ENCODE measurements at regions of chr11 and their contacts with region 1.

Region 1: GRCh38 chr11:18321980-18322711 is at the starts of genes GTF2H1 and HPS5:
- DNase-seq: peak; percentile 91 to 100 (median 96)
- ATAC-seq: peak; percentile 87
- H3K4me3 ChIP-seq: peak within 1 kb of the TSS; percentile 89 to 94
- H3K4me3 Mint-ChIP-seq: peak within 1 kb of the TSS; percentile 100
- H3K27ac ChIP-seq: peak within 1 kb of the TSS; percentile 92 to 99
- H3K27ac Mint-ChIP-seq: peak within 1 kb of the TSS; percentile 100
- H3K4me1 ChIP-seq: peaks cover 51% of the 10 kb centered on the region
- H3K4me1 Mint-ChIP-seq: peaks cover 81% of the 10 kb centered on the region
- H3K27me3 ChIP-seq: no peaks in the 10 kb centered on the region
- H3K27me3 Mint-ChIP-seq: no peaks in the 10 kb centered on the region
- CTCF ChIP-seq: no peak
- total RNA-seq, gene GTF2H1: 11.3 to 14.3 TPM
- total RNA-seq, gene HPS5: 9.9 to 12.6 TPM

Region 2: DNA sequence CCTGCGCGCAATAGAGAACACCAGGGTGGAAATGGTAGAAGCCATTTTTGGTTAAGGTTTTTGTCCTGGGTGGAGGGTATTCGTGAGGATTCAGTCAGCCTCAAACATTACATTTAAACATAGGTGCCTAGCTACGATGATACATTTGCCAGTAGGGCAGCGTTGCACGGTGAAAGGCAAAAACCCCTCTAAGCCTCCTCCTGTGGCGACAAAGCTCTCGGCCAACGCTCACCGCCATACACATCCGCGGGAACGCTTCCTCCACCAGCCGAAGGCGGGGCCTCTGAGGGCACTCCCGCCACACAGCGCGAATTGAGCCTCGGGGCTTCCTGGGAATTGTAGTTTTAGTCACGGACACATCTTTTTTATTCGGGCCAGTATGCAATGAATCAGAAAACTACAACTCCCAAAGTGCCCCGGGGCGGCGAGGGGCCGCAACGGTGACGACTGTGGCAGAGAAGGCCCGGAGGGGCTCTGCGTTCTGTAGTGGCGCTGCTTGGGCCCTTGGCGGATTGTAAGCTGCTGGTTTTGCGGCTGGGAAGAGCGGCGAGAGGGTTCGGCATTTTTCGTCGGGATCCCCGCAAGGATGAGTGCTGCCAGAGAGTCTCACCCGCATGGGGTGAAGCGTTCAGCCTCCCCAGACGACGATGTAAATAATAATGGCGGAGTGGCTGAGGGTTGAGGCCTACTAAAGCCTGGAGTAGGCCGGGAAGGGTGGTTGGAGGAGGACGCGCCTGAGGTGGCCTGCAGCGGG is 1583.8 kb before region 1 on chr11 and contains the start of gene C11orf58:
- CTCF ChIA-PET with region 1: no interaction called
- POLR2A ChIA-PET with region 1: no interaction called
- intact Hi-C with region 1: loop called in 1 of 2 experiments (anchors 5 kb)
- DNase-seq: peak; percentile 85 to 98 (median 96)
- ATAC-seq: peak; percentile 95
- H3K4me3 ChIP-seq: peak within 1 kb of the TSS; percentile 93 to 95
- H3K4me3 Mint-ChIP-seq: peak within 1 kb of the TSS; percentile 63
- H3K27ac ChIP-seq: peak within 1 kb of the TSS; percentile 99 to 100
- H3K27ac Mint-ChIP-seq: no peak within 1 kb of the TSS
- H3K4me1 ChIP-seq: peaks cover 35% of the 10 kb centered on the region
- H3K4me1 Mint-ChIP-seq: peaks cover 25% of the 10 kb centered on the region
- H3K27me3 ChIP-seq: no peaks in the 10 kb centered on the region
- H3K27me3 Mint-ChIP-seq: no peaks in the 10 kb centered on the region
- CTCF ChIP-seq: no peak
- total RNA-seq, gene C11orf58: 148 to 157 TPM

Region 3: GRCh38 chr11:17077520-17078401 is 1244.4 kb before region 1 on chr11 and contains the start of gene RPS13:
- CTCF ChIA-PET with region 1: no interaction called
- POLR2A ChIA-PET with region 1: no interaction called
- intact Hi-C with region 1: loop called (anchors 5 kb)
- DNase-seq: peak; percentile 88 to 99 (median 95)
- ATAC-seq: peak; percentile 94
- H3K4me3 ChIP-seq: peak within 1 kb of the TSS; percentile 86 to 95
- H3K4me3 Mint-ChIP-seq: peak within 1 kb of the TSS; percentile 99
- H3K27ac ChIP-seq: peak within 1 kb of the TSS; percentile 92 to 96
- H3K27ac Mint-ChIP-seq: peak within 1 kb of the TSS; percentile 99
- H3K4me1 ChIP-seq: peaks cover 25% of the 10 kb centered on the region
- H3K4me1 Mint-ChIP-seq: peaks cover 48% of the 10 kb centered on the region
- H3K27me3 ChIP-seq: no peaks in the 10 kb centered on the region
- H3K27me3 Mint-ChIP-seq: no peaks in the 10 kb centered on the region
- CTCF ChIP-seq: no peak
- total RNA-seq, gene RPS13: 2,112 to 2,169 TPM

Region 4: DNA sequence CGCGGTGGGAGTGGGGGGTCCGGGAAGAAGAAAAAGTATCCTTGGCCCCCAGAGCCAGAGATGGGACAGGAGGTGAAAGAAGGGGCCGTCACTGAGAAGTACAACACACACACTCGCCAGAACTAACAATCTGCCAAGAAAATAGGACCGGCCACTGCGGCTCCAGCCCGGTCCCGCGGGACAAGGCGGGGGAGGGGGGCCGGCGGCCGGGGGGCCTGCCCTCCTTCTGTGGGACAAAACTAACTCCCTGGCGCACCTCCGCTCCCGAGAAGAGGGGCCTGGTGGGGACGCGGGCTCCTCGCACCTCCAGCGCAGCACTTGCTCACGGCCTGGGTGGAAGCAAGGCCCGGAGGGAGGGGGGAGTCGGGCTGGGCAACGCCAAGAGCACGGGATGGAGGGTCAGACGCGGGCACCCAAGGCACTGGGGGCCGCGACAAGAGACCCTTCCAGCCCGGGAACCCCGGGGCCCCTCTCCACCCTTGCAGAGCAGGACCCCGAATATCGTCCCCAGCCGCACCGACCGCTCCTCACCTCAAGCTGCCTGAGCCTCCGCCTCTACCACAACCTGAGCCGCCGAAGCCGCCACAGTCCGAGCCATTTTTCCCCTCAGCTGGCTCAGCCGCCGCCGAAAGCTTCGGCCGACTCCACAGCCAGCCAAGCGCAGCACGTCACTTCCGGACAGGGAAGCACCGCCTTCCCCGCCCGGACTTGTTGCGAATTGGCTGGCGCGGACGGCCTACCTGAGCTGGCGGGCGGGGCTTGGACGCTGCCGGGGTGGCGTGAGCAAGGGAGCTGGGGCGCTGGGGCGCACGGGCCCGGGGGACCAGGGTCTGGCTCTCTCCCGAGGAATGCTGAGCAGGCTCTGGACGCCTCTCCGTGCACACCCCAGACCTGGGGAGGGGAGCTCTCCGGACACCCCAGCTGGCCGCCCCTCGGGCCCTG is 1114.6 kb before region 1 on chr11 and contains the start of gene PIK3C2A:
- CTCF ChIA-PET with region 1: no interaction called
- POLR2A ChIA-PET with region 1: no interaction called
- intact Hi-C with region 1: loop called (anchors 5 kb)
- DNase-seq: peak; percentile 87 to 96 (median 94)
- ATAC-seq: peak; percentile 96
- H3K4me3 ChIP-seq: peak within 1 kb of the TSS; percentile 80 to 86
- H3K4me3 Mint-ChIP-seq: peak within 1 kb of the TSS; percentile 99
- H3K27ac ChIP-seq: peak within 1 kb of the TSS; percentile 76 to 88
- H3K27ac Mint-ChIP-seq: peak within 1 kb of the TSS; percentile 99
- H3K4me1 ChIP-seq: peaks cover 26% of the 10 kb centered on the region
- H3K4me1 Mint-ChIP-seq: peaks cover 47% of the 10 kb centered on the region
- H3K27me3 ChIP-seq: no peaks in the 10 kb centered on the region
- H3K27me3 Mint-ChIP-seq: no peaks in the 10 kb centered on the region
- CTCF ChIP-seq: no peak
- total RNA-seq, gene PIK3C2A: 50.8 to 54.3 TPM

Region 5: GRCh38 chr11:18332891-18333290 is 10.7 kb after region 1 on chr11:
- CTCF ChIA-PET with region 1: interaction called, 4 read pairs
- POLR2A ChIA-PET with region 1: no interaction called
- intact Hi-C with region 1: loop called in 1 of 2 experiments (anchors 1 kb)
- DNase-seq: peak in 2 of 9 experiments; percentile 44 to 74
- ATAC-seq: peak; percentile 74
- H3K4me3 ChIP-seq: no peak overlapping the region
- H3K4me3 Mint-ChIP-seq: peak overlapping the region; percentile 68
- H3K27ac ChIP-seq: peak overlapping the region; percentile 16 to 68
- H3K27ac Mint-ChIP-seq: peak overlapping the region; percentile 92
- H3K4me1 ChIP-seq: peaks cover 29% of the 10 kb centered on the region
- H3K4me1 Mint-ChIP-seq: peaks cover 50% of the 10 kb centered on the region
- H3K27me3 ChIP-seq: no peaks in the 10 kb centered on the region
- H3K27me3 Mint-ChIP-seq: no peaks in the 10 kb centered on the region
- CTCF ChIP-seq: no peak

Region 6: DNA sequence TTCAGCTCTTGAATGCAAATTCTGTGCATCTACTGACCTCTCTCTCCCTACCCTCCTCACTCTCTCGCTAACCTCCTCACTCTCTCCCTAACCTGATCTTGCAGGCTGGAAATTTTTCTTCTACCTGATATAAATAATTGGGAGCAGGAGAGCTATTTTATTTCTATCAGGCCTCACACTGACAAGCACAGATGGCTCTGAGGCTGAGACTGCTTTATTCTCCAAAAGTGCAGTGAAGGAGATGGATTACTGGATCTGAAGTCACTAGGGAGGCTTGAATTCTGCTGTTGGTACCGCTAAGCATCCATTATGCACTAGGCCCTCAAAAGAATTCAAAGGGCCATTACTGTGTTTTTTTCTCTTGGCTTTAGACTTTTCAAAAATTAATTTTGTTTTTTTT is 52.8 kb after region 1 on chr11:
- CTCF ChIA-PET with region 1: no interaction called
- POLR2A ChIA-PET with region 1: no interaction called
- intact Hi-C with region 1: no loop called
- DNase-seq: no peak
- ATAC-seq: no peak
- H3K4me3 ChIP-seq: no peak overlapping the region
- H3K4me3 Mint-ChIP-seq: no peak overlapping the region
- H3K27ac ChIP-seq: no peak overlapping the region
- H3K27ac Mint-ChIP-seq: no peak overlapping the region
- H3K4me1 ChIP-seq: no peaks in the 10 kb centered on the region
- H3K4me1 Mint-ChIP-seq: no peaks in the 10 kb centered on the region
- H3K27me3 ChIP-seq: no peaks in the 10 kb centered on the region
- H3K27me3 Mint-ChIP-seq: no peaks in the 10 kb centered on the region
- CTCF ChIP-seq: no peak

Region 7: GRCh38 chr11:18395735-18396504 is 73.8 kb after region 1 on chr11:
- CTCF ChIA-PET with region 1: interaction called, 11 read pairs
- POLR2A ChIA-PET with region 1: interaction called, 57 read pairs
- intact Hi-C with region 1: loop called (anchors 1 kb)
- DNase-seq: peak; percentile 89 to 98 (median 92)
- ATAC-seq: peak; percentile 54
- H3K4me3 ChIP-seq: peak overlapping the region; percentile 86 to 98
- H3K4me3 Mint-ChIP-seq: peak overlapping the region; percentile 97
- H3K27ac ChIP-seq: peak overlapping the region; percentile 90
- H3K27ac Mint-ChIP-seq: peak overlapping the region; percentile 96
- H3K4me1 ChIP-seq: peaks cover 22% of the 10 kb centered on the region
- H3K4me1 Mint-ChIP-seq: peaks cover 35% of the 10 kb centered on the region
- H3K27me3 ChIP-seq: no peaks in the 10 kb centered on the region
- H3K27me3 Mint-ChIP-seq: no peaks in the 10 kb centered on the region
- CTCF ChIP-seq: no peak

Measured in CD8-positive, alpha-beta T cell (primary cell).